ENCODE measurements at regions of chr6 and their contacts with region 1.

Region 1: DNA sequence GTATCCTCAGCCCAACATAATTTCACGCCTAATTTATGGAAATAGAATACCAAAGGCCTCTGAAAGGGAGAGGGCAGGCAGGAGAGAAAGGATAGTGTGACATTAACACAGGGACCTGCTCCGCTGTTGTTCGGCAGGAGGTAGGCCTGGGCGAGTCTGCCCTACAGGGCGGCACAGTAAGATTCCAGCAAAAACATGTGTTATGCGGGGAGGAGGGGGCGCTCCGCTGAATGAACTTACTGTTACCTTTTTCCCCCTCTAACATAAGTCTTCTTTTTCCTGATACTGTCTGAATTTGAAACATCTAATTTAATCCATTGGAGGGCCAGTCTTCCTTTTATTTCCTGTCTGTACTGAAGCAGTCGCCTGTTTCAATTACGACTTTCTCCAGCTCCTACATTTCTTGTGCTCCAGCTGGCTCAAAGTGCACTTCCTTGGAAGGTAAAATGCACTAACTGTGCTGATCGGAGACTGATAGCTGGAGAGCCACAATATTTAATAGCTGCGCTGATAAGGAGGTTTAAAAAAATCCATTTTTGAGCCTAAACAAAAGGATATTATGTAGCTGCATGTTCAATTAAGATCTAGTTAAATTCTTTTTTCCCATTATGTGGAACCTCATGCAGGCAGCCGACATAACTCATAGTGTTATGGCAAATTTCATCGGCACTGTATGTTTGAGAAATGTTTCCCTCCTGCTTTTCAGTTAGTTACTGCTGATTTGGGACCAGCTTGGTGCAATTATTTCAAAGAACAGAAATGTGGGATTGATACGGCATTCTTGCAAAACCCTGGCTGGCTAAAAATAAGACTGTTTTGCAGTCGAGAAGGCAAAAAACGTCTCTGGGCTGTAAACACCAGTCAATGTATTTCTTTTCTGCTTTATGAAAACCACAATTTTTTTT is 193.0 kb downstream of the FOXC1 start:
- DNase-seq: no peak
- ATAC-seq: peak in 4 of 8 donors; percentile 49 to 75 (median 55)
- H3K4me3 ChIP-seq: peak overlapping the region in 6 of 10 donors; percentile 7 to 20 (median 10)
- H3K27ac ChIP-seq: peak overlapping the region in 5 of 10 donors; percentile 27 to 52 (median 43)
- H3K4me1 ChIP-seq: peaks cover 0 to 20% (median under 1%) of the 10 kb centered on the region in 9 donors
- H3K27me3 ChIP-seq: no peaks in the 10 kb centered on the region
- CTCF ChIP-seq: no peak

Region 2: GRCh38 chr6:1767481-1768251 is 35.1 kb before region 1 on chr6:
- intact Hi-C with region 1: loop called in 1 of 10 experiments (anchors 5 kb)
- DNase-seq: peak in 1 of 2 donors; percentile 49
- ATAC-seq: peak; percentile 85 to 96 (median 90)
- H3K4me3 ChIP-seq: no peak overlapping the region
- H3K27ac ChIP-seq: no peak overlapping the region
- H3K4me1 ChIP-seq: peaks cover 6 to 48% (median 27%) of the 10 kb centered on the region in 9 donors
- H3K27me3 ChIP-seq: no peaks in the 10 kb centered on the region
- CTCF ChIP-seq: no peak

Measured in heart right ventricle (tissue), 16 donors.